ENCODE measurements at regions of chr5 and their contacts with region 1.

Region 1: DNA sequence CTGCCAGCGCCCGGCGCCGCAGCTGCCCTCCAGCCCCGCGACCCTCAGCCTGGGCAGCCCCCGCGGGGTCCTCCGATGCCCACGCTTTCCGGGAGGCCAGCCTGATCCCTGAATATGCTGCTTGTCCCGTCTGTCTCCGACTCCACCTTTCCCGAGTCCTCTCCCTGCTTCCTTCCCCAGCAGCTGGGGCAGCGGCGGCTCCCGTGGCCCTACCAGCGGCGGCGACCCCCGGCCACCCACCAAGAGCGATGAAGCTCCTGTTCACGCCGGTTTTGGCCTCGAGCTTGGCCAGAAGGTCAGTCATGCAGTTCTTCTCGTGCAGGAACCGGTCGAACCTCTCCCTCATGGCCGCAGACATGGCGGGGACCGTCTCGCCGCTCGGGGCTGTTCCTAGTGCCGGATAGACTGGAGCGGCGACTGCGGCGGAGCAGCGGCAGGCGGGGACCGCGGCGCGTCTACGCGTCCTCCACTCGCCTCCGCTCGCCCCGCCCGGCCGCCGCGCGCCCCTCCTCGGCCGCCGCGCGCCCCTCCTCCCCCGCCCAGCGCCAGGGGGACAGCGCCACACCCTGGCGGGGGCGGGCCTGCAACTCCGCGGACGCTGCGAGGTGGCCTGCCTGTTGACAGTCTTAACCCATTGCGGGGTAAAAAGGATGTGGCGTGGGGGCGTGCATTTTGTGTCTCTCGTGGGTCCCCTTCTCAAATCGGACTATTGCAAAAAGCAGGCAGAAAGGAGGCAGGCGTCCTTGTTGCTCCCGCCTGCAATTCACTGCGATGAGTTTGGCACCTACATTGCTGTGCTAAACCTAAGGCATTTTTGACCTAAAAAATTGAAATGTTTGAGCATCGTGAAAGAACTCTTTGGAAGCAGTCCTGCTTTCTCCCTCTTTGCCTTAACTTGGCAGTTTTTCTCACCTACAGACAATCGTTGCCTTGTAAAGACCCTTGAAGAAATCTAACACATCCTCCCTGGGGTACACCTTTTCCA is at the start of gene REEP5:
- DNase-seq: peak; percentile 91 to 92 (median 91)
- ATAC-seq: peak; percentile 90 to 95 (median 92)
- H3K4me3 ChIP-seq: peak within 1 kb of the TSS; percentile 97 to 99 (median 98)
- H3K27ac ChIP-seq: peak within 1 kb of the TSS; percentile 94 to 97 (median 95)
- H3K4me1 ChIP-seq: peaks cover 0 to 22% (median 8%) of the 10 kb centered on the region in 4 donors
- H3K27me3 ChIP-seq: no peaks in the 10 kb centered on the region
- CTCF ChIP-seq: peak; percentile 77 to 94 (median 84)
- POLR2A ChIP-seq: peak; percentile 96
- total RNA-seq, gene REEP5: 52.2 to 75.6 (median 64.0) TPM

Region 2: DNA sequence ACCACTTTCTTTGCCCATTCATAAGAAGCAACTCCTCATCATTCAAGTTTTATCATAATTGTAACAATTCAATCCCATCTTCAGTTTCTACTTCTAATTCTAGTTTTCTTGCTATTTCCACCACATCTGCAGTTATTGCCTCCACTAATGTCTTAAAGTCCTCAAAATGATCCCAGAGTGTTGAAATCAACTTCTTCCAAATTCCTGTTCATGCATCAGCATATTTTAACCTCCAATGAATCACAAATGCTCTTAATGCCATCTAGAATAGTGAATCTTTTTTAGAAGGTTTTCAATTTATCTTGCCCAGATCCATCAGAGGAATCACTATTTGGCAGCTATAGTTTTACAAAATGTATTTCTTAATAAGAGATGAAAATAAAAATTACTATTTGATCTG is 64.3 kb before region 1 on chr5:
- intact Hi-C with region 1: loop called in 1 of 2 experiments (anchors 10 kb)
- DNase-seq: no peak
- ATAC-seq: no peak
- H3K4me3 ChIP-seq: no peak overlapping the region
- H3K27ac ChIP-seq: no peak overlapping the region
- H3K4me1 ChIP-seq: peaks cover 0 to 15% (median 0%) of the 10 kb centered on the region in 4 donors
- H3K27me3 ChIP-seq: no peaks in the 10 kb centered on the region
- CTCF ChIP-seq: no peak
- POLR2A ChIP-seq: no peak

Measured in right lobe of liver (tissue), 6 donors.